ENCODE measurements at regions of chr15 and their contacts with region 1.

Region 1: DNA sequence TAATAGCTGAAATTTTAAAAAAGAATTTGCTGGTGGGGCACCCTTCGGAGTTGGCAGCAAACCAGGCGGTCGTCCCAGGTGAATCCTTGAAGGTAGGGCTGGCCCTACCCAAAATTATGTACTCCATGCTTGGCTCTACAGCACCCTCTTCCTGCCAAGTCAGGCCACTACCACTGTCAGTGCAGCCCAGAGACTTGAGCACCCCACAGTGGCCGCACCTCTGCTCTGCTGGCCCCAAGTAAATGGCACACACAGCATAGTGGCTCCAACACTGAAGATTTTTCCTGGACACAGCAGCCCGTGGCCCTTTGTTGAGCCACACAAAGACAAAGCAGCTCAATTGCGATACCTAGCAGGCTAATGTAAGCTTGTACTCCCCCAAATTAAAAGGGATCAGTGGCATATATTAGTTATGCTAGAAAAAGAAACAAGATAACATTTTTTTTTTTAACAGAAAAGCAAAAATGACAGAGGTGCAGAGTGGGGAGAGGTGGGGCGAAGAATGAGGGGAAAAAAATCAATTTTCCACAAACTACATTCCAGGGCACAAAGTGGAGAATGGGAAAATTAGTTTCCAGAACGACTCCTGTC is 250.5 kb downstream of the UACA start:
- H3K4me3 ChIP-seq: no peak overlapping the region
- H3K27ac ChIP-seq: no peak overlapping the region
- H3K4me1 ChIP-seq: peaks cover 9% of the 10 kb centered on the region; the same call in 1 of the 2 replicates
- CTCF ChIP-seq: peak; percentile 73

Region 2: DNA sequence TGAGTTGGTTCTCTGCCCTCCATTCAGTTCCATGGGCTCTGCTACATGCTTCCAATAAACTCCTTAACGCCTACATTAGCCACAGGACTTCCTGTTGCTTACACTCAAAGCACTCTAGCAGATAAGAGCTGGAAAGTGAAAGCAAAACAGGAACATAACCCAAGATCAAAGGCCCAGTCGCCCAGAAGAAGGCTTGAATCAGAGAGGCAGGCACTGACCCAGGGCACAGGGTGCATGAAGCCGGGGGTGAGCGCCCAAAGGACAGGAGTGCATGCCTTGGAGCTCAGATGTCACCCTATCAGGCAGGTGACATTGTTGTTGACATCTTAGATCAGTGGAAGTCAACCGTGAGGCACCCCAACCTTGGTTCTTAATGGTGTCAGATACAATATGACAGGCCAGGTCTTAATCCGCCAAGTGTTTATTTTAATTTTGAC is 15.4 kb after region 1 on chr15:
- CTCF ChIA-PET with region 1: interaction called, 12 read pairs
- POLR2A ChIA-PET with region 1: interaction called, 11 read pairs
- H3K4me3 ChIP-seq: no peak overlapping the region
- H3K27ac ChIP-seq: peak overlapping the region; percentile 97; the same call in 1 of the 2 replicates
- H3K4me1 ChIP-seq: peaks cover 29% of the 10 kb centered on the region
- CTCF ChIP-seq: no peak

Region 3: DNA sequence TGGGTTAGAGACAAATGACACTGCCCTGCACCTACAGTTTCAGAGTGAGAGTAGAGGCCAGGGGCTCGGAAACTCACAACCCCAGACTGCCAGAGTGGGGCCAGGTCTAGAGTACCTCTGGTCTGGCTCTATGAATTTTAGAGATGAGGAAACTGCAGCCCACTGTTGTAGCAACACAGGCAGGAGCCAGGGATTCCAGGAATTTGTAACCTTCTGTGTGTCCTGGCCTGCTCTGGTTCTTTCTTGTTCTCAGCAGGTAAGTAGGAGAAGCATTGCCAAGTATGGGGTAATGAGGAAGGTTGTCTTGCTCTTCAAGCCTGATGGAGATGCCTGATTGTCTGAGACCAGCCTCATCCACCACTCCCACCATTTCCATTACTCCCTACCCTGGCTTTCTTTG is 28.6 kb after region 1 on chr15:
- CTCF ChIA-PET with region 1: no interaction called
- POLR2A ChIA-PET with region 1: no interaction called
- H3K4me3 ChIP-seq: no peak overlapping the region
- H3K27ac ChIP-seq: no peak overlapping the region
- H3K4me1 ChIP-seq: no peaks in the 10 kb centered on the region
- CTCF ChIP-seq: no peak

Region 4: DNA sequence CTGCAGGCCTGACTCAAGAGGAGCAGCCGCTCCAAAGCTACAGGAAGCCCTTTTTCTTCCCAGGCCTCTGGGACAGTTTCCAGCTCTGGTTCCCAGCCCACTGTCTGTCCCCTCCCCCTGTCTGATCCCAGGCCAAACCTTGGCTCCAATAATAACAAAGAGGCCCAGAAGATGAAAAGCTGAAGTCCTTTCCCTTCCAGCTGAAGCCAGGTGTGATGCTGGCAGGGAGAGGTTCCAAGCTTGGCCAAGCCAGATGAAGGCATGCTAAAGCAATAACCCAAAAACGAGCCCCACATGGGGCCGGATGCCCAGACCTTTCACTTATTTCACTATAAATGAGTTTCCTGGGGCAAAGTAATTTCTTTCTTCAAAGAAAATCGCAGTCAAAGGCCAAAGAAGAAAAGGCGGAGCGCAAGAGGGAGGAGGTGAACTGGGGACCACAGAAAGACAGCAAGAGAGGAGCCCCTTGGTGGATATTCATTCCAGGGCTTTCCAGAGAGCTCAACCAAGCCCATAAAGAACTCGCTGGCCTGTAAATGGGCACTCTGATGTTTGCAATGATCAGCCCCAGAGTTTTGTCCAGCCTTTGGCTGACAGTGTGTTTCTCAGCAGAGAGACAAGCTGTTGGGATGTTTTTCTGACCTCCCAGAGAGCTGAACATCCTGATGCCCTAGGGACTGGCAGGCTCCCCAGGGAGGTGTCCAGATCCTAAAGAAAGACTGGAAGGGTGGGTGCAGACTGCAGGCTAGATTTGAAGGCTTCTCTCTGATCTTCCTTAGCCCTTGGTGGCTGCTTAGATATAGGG is 92.9 kb after region 1 on chr15:
- CTCF ChIA-PET with region 1: interaction called, 11 read pairs
- POLR2A ChIA-PET with region 1: no interaction called
- H3K4me3 ChIP-seq: no peak overlapping the region
- H3K27ac ChIP-seq: no peak overlapping the region
- H3K4me1 ChIP-seq: peaks cover 8% of the 10 kb centered on the region
- CTCF ChIP-seq: no peak